Activated B cell treated with CpG ODN at 0.5 μM for 24 hours (primary cell): ENCODE measurements at regions of chr1 and their contacts with region 1.

Region 1: DNA sequence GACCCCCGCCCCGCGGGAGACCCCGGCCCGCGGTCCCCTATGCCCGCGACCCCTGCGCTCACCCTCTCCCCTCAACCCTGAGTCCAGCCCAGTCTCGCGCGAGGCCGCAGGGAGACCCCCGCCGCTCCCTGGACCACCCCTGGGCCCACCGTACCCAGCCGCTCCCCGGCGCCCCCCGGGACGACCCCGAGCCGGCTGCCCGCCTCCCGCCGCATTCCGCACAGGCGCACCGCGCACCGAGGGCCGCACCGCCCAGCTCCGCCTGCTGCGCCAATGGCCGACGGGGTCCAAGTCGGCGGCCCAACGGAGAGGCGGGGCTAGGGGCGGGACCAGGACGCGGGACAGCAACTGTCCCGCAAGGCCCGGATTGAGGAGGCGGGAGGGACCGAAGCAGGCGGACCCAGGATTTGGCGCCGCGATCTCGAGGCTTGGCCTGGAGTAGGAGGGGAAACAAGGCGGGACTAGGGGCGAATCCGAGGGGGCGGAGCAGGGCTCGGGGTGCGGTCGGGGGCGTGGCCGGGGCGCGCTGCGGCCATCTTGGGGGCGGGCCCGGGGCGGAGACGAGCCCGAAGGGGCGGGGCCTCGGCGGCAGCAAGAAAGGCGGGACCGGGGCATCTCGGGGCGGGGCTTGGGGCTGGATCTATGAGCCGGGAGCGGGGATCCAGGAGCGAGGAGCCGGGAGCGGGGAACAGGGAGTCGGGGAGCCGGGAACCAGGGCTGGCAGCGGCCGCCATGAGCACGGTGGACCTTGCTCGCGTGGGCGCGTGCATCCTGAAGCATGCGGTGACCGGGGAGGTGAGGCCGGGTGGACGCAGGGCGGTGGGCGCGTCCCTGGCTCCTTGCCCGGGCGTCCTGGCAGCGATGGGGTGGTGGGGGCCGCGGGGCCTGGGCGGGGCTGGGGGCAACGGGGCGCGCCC is at the start of gene PRXL2B:
- DNase-seq: peak; percentile 99
- ATAC-seq: peak; percentile 74
- H3K4me3 Mint-ChIP-seq: peak within 1 kb of the TSS; percentile 92
- H3K27ac Mint-ChIP-seq: peak within 1 kb of the TSS; percentile 98
- H3K4me1 Mint-ChIP-seq: peaks cover 47% of the 10 kb centered on the region
- H3K27me3 Mint-ChIP-seq: no peaks in the 10 kb centered on the region
- CTCF ChIP-seq: no peak
- total RNA-seq, gene PRXL2B: 12.6 and 13.5 TPM in 2 replicates

Region 2: DNA sequence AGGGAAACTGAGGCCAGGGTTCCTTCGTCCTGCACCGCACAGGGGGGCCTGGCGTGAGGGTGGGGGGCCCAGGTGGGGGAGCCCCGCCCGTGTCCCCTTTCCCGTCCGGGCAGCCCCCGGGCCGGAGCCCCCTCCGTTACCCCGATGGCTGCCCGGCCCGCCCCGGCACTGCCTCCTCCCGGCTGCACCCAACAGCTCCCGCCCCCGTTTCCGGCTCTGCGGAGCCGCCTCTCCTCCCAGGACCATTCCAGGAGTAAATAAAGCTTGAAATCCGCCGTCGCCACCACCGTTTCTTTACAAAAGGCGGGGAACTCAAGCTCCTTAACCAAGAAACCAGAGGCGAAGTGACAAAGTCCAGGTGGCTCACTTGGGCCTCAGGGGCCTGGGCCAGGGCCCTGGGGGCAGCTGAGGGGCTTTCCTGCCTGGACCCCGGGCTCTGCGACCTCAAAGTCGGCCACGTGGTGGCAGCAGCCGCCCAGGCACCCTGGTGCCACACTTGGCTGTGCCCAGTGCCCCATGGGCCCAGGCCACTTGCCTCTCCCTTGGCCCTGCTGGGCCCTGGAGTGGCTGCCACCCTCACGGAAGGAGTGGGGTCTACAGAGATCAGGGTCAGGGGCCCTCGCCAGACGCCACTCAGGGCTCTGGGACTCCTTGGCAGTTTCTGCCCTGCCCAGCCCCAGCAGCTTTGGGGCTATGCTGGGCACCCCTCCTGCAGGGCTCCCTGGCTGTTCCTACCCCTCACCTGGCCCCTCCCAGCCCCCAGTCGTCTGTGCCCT is 391.3 kb before region 1 on chr1:
- CTCF ChIA-PET with region 1: interaction called, 4 read pairs
- POLR2A ChIA-PET with region 1: interaction called, 16 read pairs
- intact Hi-C with region 1: no loop called
- DNase-seq: peak; percentile 87
- ATAC-seq: peak; percentile 77
- H3K4me3 Mint-ChIP-seq: peak overlapping the region; percentile 91
- H3K27ac Mint-ChIP-seq: peak overlapping the region; percentile 96
- H3K4me1 Mint-ChIP-seq: peaks cover 25% of the 10 kb centered on the region
- H3K27me3 Mint-ChIP-seq: no peaks in the 10 kb centered on the region
- CTCF ChIP-seq: peak; percentile 23

Region 3: GRCh38 chr1:2391041-2391930 is 195.1 kb before region 1 on chr1 and contains the starts of genes MORN1 and RER1:
- CTCF ChIA-PET with region 1: no interaction called
- POLR2A ChIA-PET with region 1: interaction called, 4 read pairs
- intact Hi-C with region 1: loop called (anchors 1 kb)
- DNase-seq: peak; percentile 96
- ATAC-seq: peak; percentile 94
- H3K4me3 Mint-ChIP-seq: peak within 1 kb of the TSS; percentile 88
- H3K27ac Mint-ChIP-seq: peak within 1 kb of the TSS; percentile 68
- H3K4me1 Mint-ChIP-seq: peaks cover 52% of the 10 kb centered on the region
- H3K27me3 Mint-ChIP-seq: no peaks in the 10 kb centered on the region
- CTCF ChIP-seq: no peak
- total RNA-seq, gene MORN1: 15.6 and 17.8 TPM in 2 replicates
- total RNA-seq, gene RER1: 102 and 105 TPM in 2 replicates

Region 4: GRCh38 chr1:2545759-2546514 is 40.5 kb before region 1 on chr1:
- CTCF ChIA-PET with region 1: interaction called, 13 read pairs
- POLR2A ChIA-PET with region 1: interaction called, 209 read pairs
- intact Hi-C with region 1: loop called (anchors 1 kb)
- DNase-seq: peak; percentile 82
- ATAC-seq: peak; percentile 51
- H3K4me3 Mint-ChIP-seq: peak overlapping the region; percentile 87
- H3K27ac Mint-ChIP-seq: peak overlapping the region; percentile 50
- H3K4me1 Mint-ChIP-seq: peaks cover 40% of the 10 kb centered on the region
- H3K27me3 Mint-ChIP-seq: peaks cover 6% of the 10 kb centered on the region
- CTCF ChIP-seq: no peak

Region 5: GRCh38 chr1:2575801-2576663 is 10.4 kb before region 1 on chr1:
- CTCF ChIA-PET with region 1: interaction called, 3 read pairs
- POLR2A ChIA-PET with region 1: interaction called, 55 read pairs
- intact Hi-C with region 1: no loop called
- DNase-seq: no peak
- ATAC-seq: no peak
- H3K4me3 Mint-ChIP-seq: peak overlapping the region; percentile 78
- H3K27ac Mint-ChIP-seq: peak overlapping the region; percentile 95
- H3K4me1 Mint-ChIP-seq: peaks cover 72% of the 10 kb centered on the region
- H3K27me3 Mint-ChIP-seq: no peaks in the 10 kb centered on the region
- CTCF ChIP-seq: no peak

Region 6: DNA sequence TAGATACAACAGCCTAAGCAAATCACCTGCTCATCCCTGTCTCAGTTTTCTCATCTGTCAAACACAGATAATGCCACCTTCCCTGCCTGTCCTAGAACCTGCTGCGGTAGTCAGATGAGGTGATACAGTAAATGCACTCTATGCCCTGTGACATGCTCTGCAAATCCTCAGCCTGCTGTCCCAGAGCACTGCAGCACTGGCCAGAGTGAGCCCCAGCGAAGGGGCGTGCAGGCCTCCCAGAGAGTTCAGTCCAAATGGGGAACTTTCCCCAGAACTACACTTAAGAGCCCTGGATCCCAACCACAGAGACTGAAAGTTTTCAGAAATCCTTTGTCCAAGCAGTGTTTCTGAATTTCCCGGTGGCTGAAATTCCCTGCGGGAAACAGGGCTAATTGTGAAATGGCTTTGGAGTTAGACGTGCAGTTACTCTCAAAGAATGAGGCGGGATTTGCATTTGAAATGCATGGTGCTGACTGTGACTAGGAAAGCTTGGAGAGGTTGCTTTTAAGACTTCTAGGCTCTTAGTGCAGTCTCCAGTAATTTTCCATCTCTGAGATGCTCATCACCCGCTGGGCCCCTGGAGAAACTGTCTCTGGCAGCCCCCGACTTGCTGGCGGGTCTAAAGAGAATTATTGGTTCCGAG is 1861.5 kb after region 1 on chr1:
- CTCF ChIA-PET with region 1: no interaction called
- POLR2A ChIA-PET with region 1: no interaction called
- intact Hi-C with region 1: no loop called
- DNase-seq: no peak
- ATAC-seq: no peak
- H3K4me3 Mint-ChIP-seq: no peak overlapping the region
- H3K27ac Mint-ChIP-seq: no peak overlapping the region
- H3K4me1 Mint-ChIP-seq: no peaks in the 10 kb centered on the region
- H3K27me3 Mint-ChIP-seq: peaks cover 28% of the 10 kb centered on the region
- CTCF ChIP-seq: no peak